A549 (cell line): ENCODE measurements at regions of chr12 and their contacts with region 1.

Region 1: DNA sequence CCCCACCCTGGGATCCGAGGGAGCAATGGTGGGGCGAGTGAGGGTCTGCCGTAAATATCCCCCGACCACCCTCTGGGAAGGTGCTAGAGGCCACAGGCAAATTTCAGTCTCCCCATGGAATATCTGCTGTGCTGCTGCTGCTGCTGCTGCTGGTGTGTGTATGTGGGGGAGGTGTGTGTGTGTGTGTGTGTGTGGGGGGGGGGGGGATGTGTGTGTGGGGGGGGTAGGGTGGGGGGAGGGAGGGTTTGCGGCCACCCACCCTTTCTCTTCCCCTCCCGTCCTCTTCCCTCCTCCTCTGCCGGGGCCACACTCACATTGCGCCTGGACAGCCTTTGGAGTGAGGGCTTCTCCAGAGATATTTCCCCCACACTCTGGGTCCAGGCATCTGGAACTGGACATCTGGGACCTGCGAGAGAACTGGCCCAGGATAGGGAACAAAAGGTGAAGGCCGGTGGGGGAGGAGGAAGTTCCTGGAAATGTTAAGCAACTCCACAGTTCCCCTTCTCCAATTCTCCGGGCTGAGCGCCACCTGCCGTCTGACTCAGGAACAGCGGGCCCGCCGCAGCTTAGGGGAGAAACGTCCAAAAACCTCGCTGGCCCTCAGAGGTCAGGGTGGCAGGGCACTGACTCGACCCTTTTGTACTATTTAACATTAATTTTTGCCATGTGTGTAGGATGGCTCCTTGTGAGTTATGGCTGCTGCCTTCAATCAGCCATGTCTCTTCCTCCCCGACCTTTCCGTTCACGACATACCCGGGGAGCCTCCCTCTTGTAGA is at the start of gene C1RL:
- DNase-seq: peak; percentile 73 to 90
- ATAC-seq: peak; percentile 67 to 71
- H3K4me3 ChIP-seq: peak within 1 kb of the TSS; percentile 55
- H3K27ac ChIP-seq: peak within 1 kb of the TSS; percentile 96 to 97
- H3K4me1 ChIP-seq: peaks cover 30% of the 10 kb centered on the region
- CTCF ChIP-seq: peak; percentile 88
- EP300 ChIP-seq: 0 out of 5 replicates have a peak, but pooled peaks of 1 of the 2 experiments have one; percentile 24
- POLR2A ChIP-seq: peak; percentile 41
- RAD21 ChIP-seq: peak; percentile 81
- polyA plus RNA-seq, gene C1RL: 30.4 and 32.4 TPM in 2 replicates

Region 2: DNA sequence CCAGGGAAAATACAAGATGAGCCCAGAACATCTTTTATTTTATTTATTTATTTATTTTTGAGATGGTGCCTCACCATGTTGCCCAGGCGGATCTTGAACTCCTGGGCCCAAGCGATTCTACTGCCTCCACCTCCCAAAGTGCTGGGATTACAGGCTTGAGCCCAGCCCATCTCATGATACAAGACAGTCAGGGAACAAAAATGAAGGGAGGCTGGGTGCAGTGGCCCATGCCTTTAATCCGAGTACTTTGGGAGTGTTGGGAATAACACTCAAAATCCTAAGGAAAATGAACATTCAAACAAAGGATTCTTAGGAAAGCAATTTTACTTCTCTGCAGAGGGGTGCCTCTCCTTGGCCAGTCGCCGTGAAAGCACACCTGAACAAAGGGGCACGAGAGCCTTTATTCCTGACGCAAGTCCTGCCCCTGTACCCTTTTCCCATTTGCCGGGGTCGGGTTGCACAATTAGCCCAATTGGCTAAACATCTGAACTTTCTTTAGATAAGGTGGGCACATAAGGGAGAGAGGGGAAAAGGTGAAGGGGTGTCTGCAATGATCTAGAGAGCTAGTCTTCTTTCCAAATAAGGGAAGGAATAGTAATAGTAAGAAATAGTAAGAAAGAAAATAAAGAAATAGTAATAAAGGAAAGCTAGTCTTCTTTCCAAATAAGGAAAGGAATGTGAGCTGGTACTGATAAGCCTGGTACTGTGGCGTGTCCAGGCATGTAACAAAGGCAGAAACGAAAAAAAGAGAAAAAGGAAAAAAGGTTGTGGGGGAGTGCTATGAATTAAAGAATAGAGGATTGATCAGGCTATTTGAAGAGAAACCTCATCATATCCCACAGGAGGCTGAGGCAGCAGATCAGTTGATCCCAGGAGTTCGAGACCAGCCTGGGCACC is 601.6 kb before region 1 on chr12:
- CTCF ChIA-PET with region 1: no interaction called
- POLR2A ChIA-PET with region 1: no interaction called
- DNase-seq: no peak
- ATAC-seq: no peak
- H3K4me3 ChIP-seq: no peak overlapping the region
- H3K27ac ChIP-seq: peak overlapping the region; percentile 25 to 55; a peak in 4 of 6 replicates
- H3K4me1 ChIP-seq: no peaks in the 10 kb centered on the region
- CTCF ChIP-seq: no peak
- EP300 ChIP-seq: no peak
- POLR2A ChIP-seq: no peak
- RAD21 ChIP-seq: no peak

Region 3: GRCh38 chr12:6944381-6945186 is 164.4 kb before region 1 on chr12:
- CTCF ChIA-PET with region 1: interaction called, 44 read pairs
- POLR2A ChIA-PET with region 1: interaction called, 30 read pairs
- DNase-seq: peak; percentile 93 to 97
- ATAC-seq: peak; percentile 52 to 73
- H3K4me3 ChIP-seq: peak overlapping the region; percentile 59
- H3K27ac ChIP-seq: peak overlapping the region; percentile 80 to 90
- H3K4me1 ChIP-seq: peaks cover 36% of the 10 kb centered on the region
- CTCF ChIP-seq: peak; percentile 85
- EP300 ChIP-seq: no peak
- POLR2A ChIP-seq: no peak; the same call in 1 of the 2 replicates
- RAD21 ChIP-seq: peak; percentile 87

Region 4: GRCh38 chr12:7012024-7012607 is 96.9 kb before region 1 on chr12:
- CTCF ChIA-PET with region 1: interaction called, 22 read pairs
- POLR2A ChIA-PET with region 1: no interaction called
- DNase-seq: no peak
- ATAC-seq: no peak
- H3K4me3 ChIP-seq: no peak overlapping the region
- H3K27ac ChIP-seq: no peak overlapping the region
- H3K4me1 ChIP-seq: peaks cover 16% of the 10 kb centered on the region
- CTCF ChIP-seq: no peak
- EP300 ChIP-seq: no peak
- POLR2A ChIP-seq: no peak
- RAD21 ChIP-seq: no peak

Region 5: DNA sequence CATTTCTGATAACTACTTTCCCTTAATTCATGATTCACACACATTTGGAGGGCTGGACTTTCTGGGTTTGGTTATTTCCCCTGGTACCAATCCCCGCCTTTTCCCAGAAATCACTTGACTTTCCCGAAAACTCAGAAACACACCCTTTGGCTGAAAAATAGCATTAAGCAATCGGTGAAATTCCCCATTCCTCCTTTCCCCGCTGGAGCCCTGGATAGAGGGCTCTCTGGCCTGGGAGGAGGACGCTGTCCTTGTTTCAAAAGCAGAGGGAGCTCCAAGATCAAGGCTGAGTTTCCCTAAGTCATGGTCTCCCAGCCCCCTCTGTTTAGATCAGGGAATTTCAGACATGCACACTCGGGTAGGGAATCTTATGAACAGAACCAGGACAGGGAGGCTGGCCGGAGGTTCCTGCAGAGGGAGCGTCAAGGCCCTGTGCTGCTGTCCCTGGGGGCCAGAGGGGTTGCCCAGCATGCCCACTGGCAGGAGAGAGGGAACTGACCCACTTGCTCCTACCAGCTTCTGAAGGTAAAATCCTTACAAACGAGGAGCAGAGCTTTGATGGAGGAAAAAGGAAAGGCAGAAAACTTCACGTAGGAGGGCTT is 48.5 kb before region 1 on chr12 and contains the start of gene C1S:
- CTCF ChIA-PET with region 1: interaction called, 309 read pairs
- POLR2A ChIA-PET with region 1: interaction called, 27 read pairs
- DNase-seq: peak; percentile 93 to 95
- ATAC-seq: peak; percentile 99
- H3K4me3 ChIP-seq: peak within 1 kb of the TSS; percentile 15; the same call in 1 of the 3 replicates
- H3K27ac ChIP-seq: peak within 1 kb of the TSS; percentile 77 to 93
- H3K4me1 ChIP-seq: peaks cover 22% of the 10 kb centered on the region
- CTCF ChIP-seq: peak; percentile 96
- EP300 ChIP-seq: no peak
- POLR2A ChIP-seq: peak; percentile 30; the same call in 1 of the 2 replicates
- RAD21 ChIP-seq: peak; percentile 98 to 99
- polyA plus RNA-seq, gene C1S: 107 and 109 TPM in 2 replicates

Region 6: GRCh38 chr12:7092229-7092985 is 16.6 kb before region 1 on chr12 and contains the start of gene C1R:
- CTCF ChIA-PET with region 1: interaction called, 113 read pairs
- POLR2A ChIA-PET with region 1: interaction called, 16 read pairs
- DNase-seq: peak; percentile 69 to 72
- ATAC-seq: peak; percentile 52 to 80
- H3K4me3 ChIP-seq: peak within 1 kb of the TSS; percentile 37
- H3K27ac ChIP-seq: peak within 1 kb of the TSS; percentile 85 to 91
- H3K4me1 ChIP-seq: peaks cover 20% of the 10 kb centered on the region; the same call in 2 of the 3 replicates
- CTCF ChIP-seq: peak; percentile 92
- EP300 ChIP-seq: no peak
- POLR2A ChIP-seq: no peak
- RAD21 ChIP-seq: peak; percentile 88 to 92
- polyA plus RNA-seq, gene C1R: 36.0 and 57.8 TPM in 2 replicates

Region 7: GRCh38 chr12:7142056-7142644 is 33.2 kb after region 1 on chr12:
- CTCF ChIA-PET with region 1: interaction called, 19 read pairs
- POLR2A ChIA-PET with region 1: no interaction called
- DNase-seq: peak; percentile 59 to 87
- ATAC-seq: peak; percentile 88 to 94
- H3K4me3 ChIP-seq: no peak overlapping the region
- H3K27ac ChIP-seq: no peak overlapping the region
- H3K4me1 ChIP-seq: no peaks in the 10 kb centered on the region
- CTCF ChIP-seq: peak; percentile 64
- EP300 ChIP-seq: no peak
- POLR2A ChIP-seq: no peak
- RAD21 ChIP-seq: peak in 1 of 2 experiments; percentile 56; a peak in 3 of 5 replicates

Region 8: DNA sequence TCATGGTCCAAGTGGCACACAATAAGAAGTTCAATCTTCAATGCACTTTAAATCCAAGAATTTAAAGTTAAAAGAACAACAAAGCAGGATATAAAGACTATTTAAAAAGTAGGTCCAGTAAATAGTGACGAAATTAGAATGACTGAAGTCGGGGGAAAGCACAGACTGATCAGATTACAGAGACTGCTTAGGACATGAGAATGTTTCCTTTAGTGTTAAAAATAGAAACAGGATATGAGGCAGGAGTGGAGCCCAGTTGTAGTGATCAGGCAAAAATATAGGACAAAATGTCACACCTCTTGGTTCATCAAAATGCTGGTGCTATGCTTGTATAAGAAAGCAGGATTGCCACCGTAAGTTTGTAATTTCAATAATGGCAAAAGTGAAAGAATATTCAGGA is 446.8 kb after region 1 on chr12:
- CTCF ChIA-PET with region 1: no interaction called
- POLR2A ChIA-PET with region 1: no interaction called
- DNase-seq: no peak
- ATAC-seq: no peak
- H3K4me3 ChIP-seq: no peak overlapping the region
- H3K27ac ChIP-seq: no peak overlapping the region
- H3K4me1 ChIP-seq: no peaks in the 10 kb centered on the region
- CTCF ChIP-seq: no peak
- EP300 ChIP-seq: no peak
- POLR2A ChIP-seq: no peak
- RAD21 ChIP-seq: no peak